ENCODE measurements at regions of chr11 and their contacts with region 1.

Region 1: DNA sequence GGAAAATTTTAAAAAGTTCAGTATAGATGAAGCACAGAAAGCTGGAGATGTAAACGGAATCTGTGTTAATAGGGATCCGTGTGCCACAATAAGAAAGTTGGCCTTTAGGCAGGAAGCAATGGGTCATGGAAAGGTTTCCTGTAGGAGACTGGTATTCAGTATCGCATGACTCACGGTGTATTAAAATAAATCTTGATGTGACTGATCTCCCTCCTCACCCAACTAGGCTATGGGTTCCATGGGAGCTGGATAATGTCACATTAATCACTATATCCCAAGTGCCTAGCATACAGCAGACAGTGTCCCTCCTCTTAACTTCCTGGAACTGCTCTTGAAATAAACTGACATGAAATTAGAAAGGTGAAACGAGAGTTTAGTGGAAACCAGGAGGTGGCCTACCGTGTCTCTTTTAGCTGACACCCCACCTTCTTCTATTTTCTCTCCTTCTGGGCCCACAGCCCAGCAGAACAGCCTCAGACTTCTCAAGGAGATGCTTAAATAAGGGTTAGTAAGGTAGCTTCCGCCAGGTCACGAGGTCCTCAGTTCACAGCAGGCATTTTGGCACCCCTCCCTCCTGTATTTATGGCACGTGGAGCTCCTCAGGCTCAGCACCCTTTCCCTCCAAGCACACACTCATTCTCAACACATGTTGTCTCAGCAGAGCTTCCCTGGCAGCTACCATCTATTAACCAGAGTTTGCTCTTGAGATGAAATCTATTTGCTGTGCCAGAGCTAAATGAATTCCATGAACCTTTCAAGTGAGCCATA is 118.8 kb downstream of the NXPE2 start:
- DNase-seq: no peak

Region 2: GRCh38 chr11:114892381-114893197 is 95.5 kb after region 1 on chr11:
- intact Hi-C with region 1: loop called (anchors 5 kb)
- DNase-seq: no peak

Region 3: GRCh38 chr11:114970927-114971645 is 173.9 kb after region 1 on chr11:
- intact Hi-C with region 1: loop called (anchors 5 kb)
- DNase-seq: no peak